ENCODE measurements at regions of chr6 and their contacts with region 1.

Region 1: GRCh38 chr6:106103728-106104109 is 17.6 kb downstream of the PRDM1 start:
- DNase-seq: peak in 13 of 14 experiments; percentile 20 to 86 (median 44)
- ATAC-seq: peak; percentile 62
- H3K4me3 ChIP-seq: peak overlapping the region; percentile 72
- H3K4me3 Mint-ChIP-seq: peak overlapping the region; percentile 90
- H3K27ac ChIP-seq: peak overlapping the region; percentile 19 to 52
- H3K27ac Mint-ChIP-seq: peak overlapping the region; percentile 95
- H3K4me1 ChIP-seq: peaks cover 59% of the 10 kb centered on the region
- H3K4me1 Mint-ChIP-seq: peaks cover 77% of the 10 kb centered on the region
- H3K27me3 ChIP-seq: no peaks in the 10 kb centered on the region
- H3K27me3 Mint-ChIP-seq: no peaks in the 10 kb centered on the region
- CTCF ChIP-seq: no peak

Region 2: DNA sequence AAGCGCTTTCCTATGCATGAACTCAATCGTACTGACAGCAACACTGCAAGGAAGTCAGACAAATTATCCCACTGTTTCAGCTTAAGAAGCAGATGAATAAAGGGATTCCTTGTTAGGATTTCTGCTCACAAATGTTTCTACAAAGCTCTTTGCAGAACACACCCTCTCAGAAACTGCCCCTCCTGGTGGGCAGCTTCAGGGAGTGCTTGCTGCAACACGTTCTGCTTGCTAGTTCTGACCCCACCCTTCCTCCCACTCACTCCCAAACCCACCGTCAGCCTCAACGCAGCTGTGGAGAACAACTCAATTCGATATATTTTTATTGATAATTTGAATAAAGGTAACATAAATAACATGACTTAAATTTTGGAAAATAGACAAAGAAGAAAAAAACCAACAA is 268.3 kb before region 1 on chr6:
- CTCF ChIA-PET with region 1: no interaction called
- POLR2A ChIA-PET with region 1: no interaction called
- intact Hi-C with region 1: no loop called
- DNase-seq: peak in 5 of 14 experiments; percentile 5 to 40 (median 20)
- ATAC-seq: no peak
- H3K4me3 ChIP-seq: no peak overlapping the region
- H3K4me3 Mint-ChIP-seq: no peak overlapping the region
- H3K27ac ChIP-seq: no peak overlapping the region
- H3K27ac Mint-ChIP-seq: no peak overlapping the region
- H3K4me1 ChIP-seq: no peaks in the 10 kb centered on the region
- H3K4me1 Mint-ChIP-seq: no peaks in the 10 kb centered on the region
- H3K27me3 ChIP-seq: no peaks in the 10 kb centered on the region
- H3K27me3 Mint-ChIP-seq: no peaks in the 10 kb centered on the region
- CTCF ChIP-seq: no peak

Region 3: DNA sequence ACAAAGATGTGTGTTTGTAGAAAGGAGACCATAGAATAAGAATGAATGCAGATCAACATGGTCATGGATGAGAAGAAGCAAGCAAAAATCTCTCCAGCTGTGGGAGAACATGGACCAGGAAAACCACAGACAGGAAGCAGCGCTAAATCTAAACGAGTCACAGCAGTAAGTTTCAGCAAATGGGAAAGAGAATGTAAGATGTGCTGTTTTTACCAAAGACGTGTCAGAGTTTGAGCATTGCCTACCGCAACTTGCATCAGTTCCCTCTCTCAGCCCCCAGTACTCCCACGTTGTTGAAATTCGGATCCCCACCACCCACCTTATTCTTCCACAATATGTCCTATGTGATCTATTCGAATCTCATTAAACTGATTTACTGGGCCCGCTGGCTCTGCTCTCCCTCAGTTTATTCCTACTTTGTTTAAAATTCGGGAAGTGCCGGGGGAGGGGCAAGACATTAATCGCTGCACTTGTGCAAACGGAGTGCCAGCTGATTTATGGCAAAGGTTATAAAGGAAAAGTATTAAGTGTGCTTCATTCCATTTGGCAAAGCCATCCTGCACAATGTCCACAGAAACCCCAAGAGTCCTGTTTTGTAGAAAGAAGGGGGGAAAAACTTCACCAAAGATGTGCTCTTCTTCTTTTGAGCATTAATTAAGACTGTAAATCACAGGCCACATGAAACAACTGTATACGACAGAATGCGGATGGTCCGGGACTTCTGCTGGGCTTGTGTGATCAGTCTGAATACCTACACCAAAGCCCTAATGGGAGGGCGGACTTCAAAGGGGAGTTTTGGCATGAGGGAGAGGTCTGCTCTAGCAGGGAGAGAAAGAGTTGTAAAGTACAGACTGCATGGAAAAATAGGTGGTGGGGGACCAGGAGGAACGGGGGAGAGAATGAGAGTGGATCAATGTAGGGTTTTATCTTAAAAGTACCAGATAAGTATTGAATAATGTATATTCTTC is 76.7 kb before region 1 on chr6:
- CTCF ChIA-PET with region 1: no interaction called
- POLR2A ChIA-PET with region 1: no interaction called
- intact Hi-C with region 1: no loop called
- DNase-seq: no peak
- ATAC-seq: no peak
- H3K4me3 ChIP-seq: no peak overlapping the region
- H3K4me3 Mint-ChIP-seq: no peak overlapping the region
- H3K27ac ChIP-seq: no peak overlapping the region
- H3K27ac Mint-ChIP-seq: no peak overlapping the region
- H3K4me1 ChIP-seq: peaks cover 10% of the 10 kb centered on the region
- H3K4me1 Mint-ChIP-seq: no peaks in the 10 kb centered on the region
- H3K27me3 ChIP-seq: no peaks in the 10 kb centered on the region
- H3K27me3 Mint-ChIP-seq: peaks cover 25% of the 10 kb centered on the region
- CTCF ChIP-seq: no peak

Region 4: GRCh38 chr6:106114492-106115265 is 11.0 kb after region 1 on chr6:
- CTCF ChIA-PET with region 1: interaction called, 4 read pairs
- POLR2A ChIA-PET with region 1: interaction called, 92 read pairs
- intact Hi-C with region 1: loop called (anchors 1 to 2 kb)
- DNase-seq: peak in 4 of 14 experiments; percentile 45 to 65 (median 60)
- ATAC-seq: no peak
- H3K4me3 ChIP-seq: peak overlapping the region; percentile 28
- H3K4me3 Mint-ChIP-seq: peak overlapping the region; percentile 64
- H3K27ac ChIP-seq: no peak overlapping the region
- H3K27ac Mint-ChIP-seq: peak overlapping the region; percentile 80
- H3K4me1 ChIP-seq: peaks cover 70% of the 10 kb centered on the region
- H3K4me1 Mint-ChIP-seq: peaks cover 85% of the 10 kb centered on the region
- H3K27me3 ChIP-seq: no peaks in the 10 kb centered on the region
- H3K27me3 Mint-ChIP-seq: peaks cover 5% of the 10 kb centered on the region
- CTCF ChIP-seq: no peak